ENCODE measurements at regions of chr11 and their contacts with region 1.

Region 1: GRCh38 chr11:86955361-86956120 is at the start of gene FZD4:
- DNase-seq: no peak
- H3K4me3 ChIP-seq: peak within 1 kb of the TSS; percentile 74 to 84
- H3K27ac ChIP-seq: peak within 1 kb of the TSS; percentile 92
- H3K4me1 ChIP-seq: peaks cover 29% of the 10 kb centered on the region
- H3K27me3 ChIP-seq: no peaks in the 10 kb centered on the region
- CTCF ChIP-seq: peak in 1 of 3 experiments; percentile 44
- POLR2A ChIP-seq: peak in 1 of 2 donors; percentile 95
- total RNA-seq, gene FZD4: 47.1 TPM

Region 2: DNA sequence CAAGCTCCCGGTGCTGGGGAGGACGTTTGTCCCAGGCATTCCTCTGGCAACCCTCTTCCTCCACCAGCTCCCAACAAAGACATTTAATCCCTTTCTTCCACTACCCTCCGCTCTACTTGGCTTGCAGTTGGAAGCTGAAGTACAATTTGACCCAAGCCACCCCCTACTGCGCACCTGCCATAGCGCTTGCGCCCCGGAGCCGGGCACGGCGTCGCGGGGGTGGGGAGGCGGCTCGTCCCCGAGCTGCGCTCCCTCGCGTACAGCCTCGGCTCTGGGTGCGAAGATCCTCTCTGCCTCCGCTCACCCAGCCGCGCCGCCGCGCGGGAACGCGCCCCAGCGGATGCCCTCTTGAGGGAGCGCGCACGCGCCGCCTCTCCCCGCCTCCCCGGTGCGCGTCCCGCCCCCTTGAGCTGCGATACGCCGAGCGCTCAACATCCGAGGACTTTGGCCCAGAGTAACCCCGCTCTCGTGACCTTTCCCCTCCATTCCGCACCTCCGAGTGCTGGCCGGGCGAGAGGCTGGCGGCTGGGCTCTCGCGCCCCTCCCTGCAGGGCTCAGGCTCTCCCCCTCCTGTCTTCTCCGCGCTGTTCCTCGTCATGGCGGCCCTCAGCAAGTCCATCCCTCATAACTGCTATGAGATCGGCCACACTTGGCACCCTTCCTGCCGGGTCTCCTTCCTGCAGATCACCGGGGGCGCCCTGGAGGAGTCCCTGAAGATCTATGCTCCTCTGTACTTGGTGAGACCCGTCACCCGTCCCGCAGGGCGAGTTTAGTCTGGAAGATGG is 82.1 kb after region 1 on chr11 and contains the start of gene TMEM135:
- intact Hi-C with region 1: loop called (anchors 5 kb)
- DNase-seq: peak; percentile 91 to 96
- H3K4me3 ChIP-seq: peak within 1 kb of the TSS; percentile 72 to 75
- H3K27ac ChIP-seq: peak within 1 kb of the TSS; percentile 77
- H3K4me1 ChIP-seq: peaks cover 25% of the 10 kb centered on the region
- H3K27me3 ChIP-seq: no peaks in the 10 kb centered on the region
- CTCF ChIP-seq: no peak
- POLR2A ChIP-seq: peak in 1 of 2 donors; percentile 17
- total RNA-seq, gene TMEM135: 17.2 TPM

Measured in vagina (tissue), 2 donors.